ENCODE measurements at regions of chr17 and their contacts with region 1.

Region 1: DNA sequence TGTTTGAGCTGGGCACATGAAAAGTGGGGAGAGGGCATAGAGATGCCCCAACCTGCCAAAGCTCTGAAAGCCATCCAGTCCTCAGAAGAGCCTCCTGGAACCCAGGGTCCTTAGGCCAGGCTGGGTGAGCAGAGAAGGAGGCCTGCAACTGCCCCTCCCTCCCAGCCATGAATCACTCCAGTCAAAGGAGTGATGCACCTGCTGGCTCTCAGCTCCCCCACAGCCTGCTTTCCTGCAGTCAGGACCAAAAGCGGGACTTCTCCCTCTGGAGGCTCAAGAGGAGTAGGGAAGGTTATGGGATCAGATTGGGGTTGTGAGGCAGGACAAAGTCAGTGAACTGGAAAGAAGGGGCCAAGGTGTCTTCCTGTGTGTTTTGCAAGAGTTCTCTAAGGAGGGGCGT is 145.6 kb downstream of the TMEM132E start:
- DNase-seq: no peak
- ATAC-seq: no peak

Region 2: GRCh38 chr17:34760931-34761495 is 36.0 kb after region 1 on chr17:
- intact Hi-C with region 1: loop called (anchors 1 kb)
- DNase-seq: no peak
- ATAC-seq: no peak